Tibial artery (tissue), 4 donors: ENCODE measurements at regions of chr3 and their contacts with region 1.

Region 1: DNA sequence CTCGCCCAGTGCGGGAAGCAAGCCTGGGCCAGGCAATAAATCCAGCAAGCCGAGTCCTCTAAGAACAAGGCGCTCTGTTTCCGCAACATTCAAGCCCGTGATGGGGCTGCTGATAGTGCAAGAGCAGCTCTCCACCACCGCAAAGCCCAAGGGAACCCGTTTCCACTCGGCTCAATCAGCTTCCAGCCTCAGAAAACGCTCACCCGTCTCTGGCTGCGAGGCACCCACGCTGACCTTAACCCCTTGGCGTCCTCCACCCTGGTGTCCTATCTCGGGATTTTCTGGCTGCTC is 17.8 kb downstream of the SPATA12 start:
- DNase-seq: peak; percentile 83 to 86
- H3K4me3 ChIP-seq: peak overlapping the region; percentile 67 to 78
- H3K27ac ChIP-seq: peak overlapping the region; percentile 51 to 55
- H3K4me1 ChIP-seq: peaks cover 0 to 21% (median 6%) of the 10 kb centered on the region in 4 donors
- H3K27me3 ChIP-seq: no peaks in the 10 kb centered on the region
- CTCF ChIP-seq: no peak

Region 2: GRCh38 chr3:56566101-56566500 is 512.2 kb before region 1 on chr3:
- intact Hi-C with region 1: no loop called
- DNase-seq: no peak
- H3K4me3 ChIP-seq: no peak overlapping the region
- H3K27ac ChIP-seq: no peak overlapping the region
- H3K4me1 ChIP-seq: peaks cover 0 to 4% (median 0%) of the 10 kb centered on the region in 4 donors
- H3K27me3 ChIP-seq: no peaks in the 10 kb centered on the region
- CTCF ChIP-seq: no peak

Region 3: DNA sequence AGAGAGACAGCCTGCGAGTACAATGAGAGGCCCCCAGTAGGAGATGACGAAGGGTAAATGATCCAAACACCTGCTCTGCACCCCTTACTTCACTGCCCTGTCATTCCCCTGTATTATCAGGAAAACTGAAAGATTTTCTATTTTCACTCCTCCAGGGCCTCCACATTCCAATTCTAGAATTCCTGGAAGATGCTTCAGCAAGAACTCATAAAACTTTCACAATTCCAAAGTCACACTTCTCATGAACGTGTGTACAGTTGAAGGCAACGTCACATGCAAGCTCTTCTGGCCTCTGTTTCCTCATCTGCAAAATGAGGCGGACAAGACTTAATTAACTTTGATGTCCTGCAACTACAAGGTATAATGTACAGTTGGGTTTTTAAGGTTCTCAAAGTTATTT is 80.6 kb before region 1 on chr3:
- intact Hi-C with region 1: loop called (anchors 10 kb)
- DNase-seq: no peak
- H3K4me3 ChIP-seq: no peak overlapping the region
- H3K27ac ChIP-seq: peak overlapping the region in 1 of 2 donors; percentile 7
- H3K4me1 ChIP-seq: peaks cover 0 to 16% (median 3%) of the 10 kb centered on the region in 4 donors
- H3K27me3 ChIP-seq: no peaks in the 10 kb centered on the region
- CTCF ChIP-seq: no peak